ENCODE measurements at regions of chr5 and their contacts with region 1.

Region 1: DNA sequence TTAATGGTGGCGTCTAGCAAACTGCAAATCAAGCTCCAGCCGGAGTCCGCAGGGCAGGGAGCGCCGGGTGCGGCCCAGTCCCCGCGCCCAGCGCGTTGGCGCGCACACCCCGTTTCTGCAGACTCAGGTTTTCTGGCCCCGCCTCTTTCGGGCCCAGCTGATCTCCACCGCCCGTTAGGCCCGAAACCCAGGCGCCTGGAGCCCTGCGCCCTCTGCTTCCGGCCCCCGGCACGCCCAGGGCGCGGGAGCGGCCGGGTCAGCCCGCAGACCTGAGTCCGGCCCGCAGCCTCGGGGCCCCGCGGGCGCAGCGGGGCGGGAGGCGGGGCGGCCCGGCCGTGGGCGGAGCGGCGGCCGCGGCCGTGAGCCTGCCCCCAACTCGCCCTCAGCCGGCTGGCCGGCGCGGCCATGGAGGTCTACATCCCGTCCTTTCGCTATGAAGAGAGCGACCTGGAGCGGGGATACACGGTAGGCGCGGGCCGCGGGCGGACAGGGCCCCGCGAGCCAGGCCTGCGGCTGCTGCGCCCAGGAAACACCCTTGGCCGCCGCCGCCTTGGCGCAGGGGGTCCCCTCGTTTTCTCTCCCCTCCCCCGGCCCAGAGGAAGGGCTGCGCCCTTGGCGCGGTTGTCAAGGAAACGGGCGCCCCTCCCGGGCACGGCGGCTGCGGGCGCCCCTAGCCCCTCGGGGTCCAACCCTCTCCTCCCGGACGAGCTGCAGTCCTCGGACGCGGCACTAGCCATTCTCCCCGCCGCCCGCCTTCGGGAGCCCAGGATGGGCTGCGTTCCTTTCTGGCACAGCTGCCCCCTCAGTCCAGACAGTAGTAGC is at the start of gene SNX24:
- DNase-seq: peak; percentile 80
- ATAC-seq: peak; percentile 84
- H3K4me3 ChIP-seq: peak within 1 kb of the TSS; percentile 70 to 91 (median 79)
- H3K27ac ChIP-seq: peak within 1 kb of the TSS; percentile 96
- H3K4me1 ChIP-seq: peaks cover 58% of the 10 kb centered on the region
- H3K27me3 ChIP-seq: no peaks in the 10 kb centered on the region; a peak in 1 of 5 replicates
- CTCF ChIP-seq: no peak; the same call in 1 of the 2 replicates
- EP300 ChIP-seq: no peak
- POLR2A ChIP-seq: peak; percentile 66 to 81
- RAD21 ChIP-seq: peak; percentile 59
- total RNA-seq, gene SNX24: 23.7 and 29.2 TPM in 2 replicates

Region 2: DNA sequence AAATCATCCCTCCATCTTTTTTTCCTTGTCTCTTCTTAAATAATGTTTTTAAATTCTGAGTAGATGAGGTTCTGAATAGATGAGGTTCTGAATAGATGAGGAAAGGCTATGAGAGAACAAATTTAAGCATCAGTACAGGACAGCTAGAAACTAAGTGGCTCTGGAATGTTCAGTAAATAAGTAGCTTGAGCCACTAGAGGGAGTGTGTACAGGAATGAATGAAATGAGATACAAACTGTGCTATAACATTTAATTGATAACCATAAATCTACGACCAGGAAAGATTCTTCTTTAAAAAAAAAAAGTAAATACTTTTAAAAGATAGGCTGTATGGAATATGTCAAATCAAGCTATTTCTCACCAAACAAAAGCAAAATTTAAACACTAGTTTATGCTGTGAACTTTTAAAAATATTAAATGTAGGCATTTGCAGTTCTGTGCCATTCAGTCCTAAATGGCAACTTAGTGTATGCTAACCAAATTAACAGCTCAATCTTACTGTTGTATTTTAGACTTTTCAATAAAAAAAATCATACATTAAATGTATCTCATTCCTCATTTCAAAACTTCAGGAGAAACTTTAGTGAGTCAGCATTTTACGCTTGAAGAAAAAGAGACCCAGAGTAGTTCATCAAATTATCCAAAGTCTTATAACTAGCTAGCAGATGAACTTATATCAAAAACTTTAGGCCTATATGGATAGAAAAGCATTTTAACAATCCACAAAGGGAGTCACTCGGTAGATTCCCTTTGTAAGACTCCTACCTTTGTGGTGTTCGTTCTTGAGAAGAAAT is 141.0 kb before region 1 on chr5:
- CTCF ChIA-PET with region 1: no interaction called
- POLR2A ChIA-PET with region 1: no interaction called
- in situ Hi-C with region 1: no loop called
- intact Hi-C with region 1: loop called (anchors 10 kb)
- DNase-seq: peak; percentile 45
- ATAC-seq: peak; percentile 80
- H3K4me3 ChIP-seq: no peak overlapping the region
- H3K27ac ChIP-seq: no peak overlapping the region
- H3K4me1 ChIP-seq: no peaks in the 10 kb centered on the region
- H3K27me3 ChIP-seq: no peaks in the 10 kb centered on the region
- CTCF ChIP-seq: peak; percentile 54
- EP300 ChIP-seq: no peak
- POLR2A ChIP-seq: no peak
- RAD21 ChIP-seq: no peak

Region 3: GRCh38 chr5:122774861-122775549 is 70.4 kb before region 1 on chr5 and contains the start of gene SNX2:
- CTCF ChIA-PET with region 1: no interaction called
- POLR2A ChIA-PET with region 1: interaction called, 8 read pairs
- in situ Hi-C with region 1: no loop called
- intact Hi-C with region 1: loop called (anchors 1 kb)
- DNase-seq: peak; percentile 76
- ATAC-seq: peak; percentile 92
- H3K4me3 ChIP-seq: peak within 1 kb of the TSS; percentile 95 to 98 (median 96)
- H3K27ac ChIP-seq: peak within 1 kb of the TSS; percentile 74
- H3K4me1 ChIP-seq: peaks cover 54% of the 10 kb centered on the region
- H3K27me3 ChIP-seq: no peaks in the 10 kb centered on the region; a peak in 1 of 5 replicates
- CTCF ChIP-seq: peak; percentile 26
- EP300 ChIP-seq: no peak
- POLR2A ChIP-seq: peak; percentile 92 to 95
- RAD21 ChIP-seq: peak; percentile 26; the same call in 1 of the 2 replicates
- total RNA-seq, gene SNX2: 78.8 and 125 TPM in 2 replicates

Region 4: GRCh38 chr5:122951658-122952057 is 106.2 kb after region 1 on chr5:
- CTCF ChIA-PET with region 1: no interaction called
- POLR2A ChIA-PET with region 1: no interaction called
- in situ Hi-C with region 1: no loop called
- intact Hi-C with region 1: no loop called
- DNase-seq: no peak
- ATAC-seq: no peak
- H3K4me3 ChIP-seq: no peak overlapping the region
- H3K27ac ChIP-seq: no peak overlapping the region
- H3K4me1 ChIP-seq: no peaks in the 10 kb centered on the region
- H3K27me3 ChIP-seq: no peaks in the 10 kb centered on the region
- CTCF ChIP-seq: no peak
- EP300 ChIP-seq: no peak
- POLR2A ChIP-seq: no peak
- RAD21 ChIP-seq: no peak

Region 5: DNA sequence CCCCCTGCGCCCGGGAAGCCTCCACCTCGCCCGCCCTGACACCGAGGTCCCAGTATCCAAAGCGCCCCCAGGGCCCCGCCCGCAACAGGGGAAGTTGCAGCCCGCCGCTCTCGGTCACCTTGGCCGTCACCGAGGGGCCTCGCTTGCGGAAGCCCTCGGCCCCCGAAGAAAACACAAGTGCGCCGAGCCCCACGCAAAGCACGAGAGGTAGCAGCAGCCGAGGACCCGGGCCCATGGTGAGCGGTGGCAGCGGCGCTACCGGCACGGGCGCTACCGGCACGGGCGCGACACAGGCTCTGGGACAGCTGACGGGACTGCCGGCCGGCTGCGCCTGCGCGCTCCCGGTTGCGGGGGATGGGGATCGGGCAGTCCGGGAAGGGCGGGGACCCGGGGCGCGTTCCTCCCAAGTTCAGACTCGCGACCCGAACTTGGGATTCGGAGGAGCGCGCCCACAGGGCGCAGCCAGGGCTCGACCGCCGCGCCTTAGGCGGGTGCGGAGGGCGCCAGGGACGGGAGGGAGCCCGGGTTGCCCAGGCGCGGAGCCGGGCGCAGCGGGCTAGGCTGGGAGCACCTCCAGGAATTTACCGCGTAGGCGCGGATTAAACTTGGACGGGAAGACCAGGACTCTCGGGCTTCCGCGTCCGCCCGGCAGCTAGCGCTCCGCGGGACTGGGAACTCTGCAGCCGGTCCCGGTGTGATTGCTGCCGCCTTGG is 191.1 kb after region 1 on chr5 and contains the start of gene PPIC:
- CTCF ChIA-PET with region 1: no interaction called
- POLR2A ChIA-PET with region 1: interaction called, 5 read pairs
- in situ Hi-C with region 1: no loop called
- intact Hi-C with region 1: loop called (anchors 5 kb)
- DNase-seq: peak; percentile 50
- ATAC-seq: peak; percentile 90
- H3K4me3 ChIP-seq: peak within 1 kb of the TSS; percentile 69 to 77 (median 73)
- H3K27ac ChIP-seq: no peak within 1 kb of the TSS
- H3K4me1 ChIP-seq: peaks cover 21% of the 10 kb centered on the region
- H3K27me3 ChIP-seq: no peaks in the 10 kb centered on the region
- CTCF ChIP-seq: no peak
- EP300 ChIP-seq: no peak
- POLR2A ChIP-seq: no peak
- RAD21 ChIP-seq: no peak; the same call in 1 of the 2 replicates
- total RNA-seq, gene PPIC: 9.9 and 17.2 TPM in 2 replicates

Region 6: DNA sequence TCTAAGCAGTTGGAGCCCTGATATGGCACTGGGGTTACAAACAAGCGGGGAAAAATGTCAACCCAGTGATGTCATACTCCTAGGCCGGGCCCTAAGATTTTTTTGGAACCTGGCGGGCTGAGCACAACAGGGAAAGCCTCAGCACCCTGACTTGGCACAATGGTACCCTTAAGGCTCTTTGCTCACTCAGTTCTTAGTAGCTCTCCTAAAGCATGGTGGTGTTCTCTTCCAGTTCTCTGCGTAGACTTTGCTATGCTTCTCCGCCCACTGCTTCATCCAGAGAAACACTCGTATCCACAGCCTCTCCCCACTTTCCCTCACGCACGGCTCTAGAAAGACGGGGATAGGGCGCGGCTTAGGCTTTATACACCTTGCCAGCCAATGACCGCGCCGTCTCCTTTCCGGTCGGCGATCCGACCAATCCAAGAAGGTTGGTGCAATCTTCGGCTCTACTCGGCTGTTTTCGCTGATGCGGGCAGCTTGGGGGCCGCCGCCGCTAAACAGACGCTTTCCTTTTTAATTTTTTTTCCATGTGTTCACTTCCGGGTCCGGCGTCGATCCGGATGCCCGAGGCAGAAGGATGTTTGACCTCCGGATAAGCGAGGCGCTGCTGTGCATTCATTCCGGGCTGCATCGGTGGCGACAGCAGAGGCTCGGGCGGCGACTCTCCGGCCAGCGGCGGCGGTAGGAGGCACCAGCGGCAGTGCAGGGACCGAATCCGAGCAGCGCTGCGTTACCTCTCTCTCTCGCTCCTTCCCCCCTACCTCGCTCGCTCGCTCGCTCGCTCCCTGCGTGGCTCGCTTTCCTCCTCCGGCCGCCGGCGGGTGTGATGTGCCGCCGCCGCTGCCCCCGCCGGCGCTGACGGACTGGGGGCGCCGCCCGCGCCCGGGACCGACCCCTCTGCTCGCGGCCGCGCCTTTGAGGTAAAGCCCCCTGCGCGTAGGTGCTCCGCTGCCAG is 666.5 kb after region 1 on chr5 and contains the start of gene CSNK1G3:
- CTCF ChIA-PET with region 1: no interaction called
- POLR2A ChIA-PET with region 1: interaction called, 3 read pairs
- in situ Hi-C with region 1: no loop called
- intact Hi-C with region 1: loop called (anchors 10 kb)
- DNase-seq: peak; percentile 93
- ATAC-seq: peak; percentile 97
- H3K4me3 ChIP-seq: peak within 1 kb of the TSS; percentile 89 to 96 (median 92)
- H3K27ac ChIP-seq: peak within 1 kb of the TSS; percentile 89
- H3K4me1 ChIP-seq: peaks cover 39% of the 10 kb centered on the region
- H3K27me3 ChIP-seq: no peaks in the 10 kb centered on the region; a peak in 1 of 5 replicates
- CTCF ChIP-seq: peak; percentile 27; the same call in 1 of the 2 replicates
- EP300 ChIP-seq: peak in 1 of 2 experiments; percentile 50; a peak in 1 of 4 replicates
- POLR2A ChIP-seq: peak; percentile 98 to 99
- RAD21 ChIP-seq: peak; percentile 64
- total RNA-seq, gene CSNK1G3: 31.5 and 35.4 TPM in 2 replicates

Measured in HepG2 (cell line).